ENCODE measurements at regions of chr19 and their contacts with region 1.

Region 1: GRCh38 chr19:11924886-11925650 is at the start of gene ZNF700:
- DNase-seq: peak; percentile 96 to 97
- H3K4me3 ChIP-seq: peak within 1 kb of the TSS; percentile 76 to 94
- H3K27ac ChIP-seq: peak within 1 kb of the TSS; percentile 96
- H3K4me1 ChIP-seq: peaks cover 0 to 28% (median 21%) of the 10 kb centered on the region in 4 donors
- H3K27me3 ChIP-seq: no peaks in the 10 kb centered on the region
- CTCF ChIP-seq: no peak

Region 2: DNA sequence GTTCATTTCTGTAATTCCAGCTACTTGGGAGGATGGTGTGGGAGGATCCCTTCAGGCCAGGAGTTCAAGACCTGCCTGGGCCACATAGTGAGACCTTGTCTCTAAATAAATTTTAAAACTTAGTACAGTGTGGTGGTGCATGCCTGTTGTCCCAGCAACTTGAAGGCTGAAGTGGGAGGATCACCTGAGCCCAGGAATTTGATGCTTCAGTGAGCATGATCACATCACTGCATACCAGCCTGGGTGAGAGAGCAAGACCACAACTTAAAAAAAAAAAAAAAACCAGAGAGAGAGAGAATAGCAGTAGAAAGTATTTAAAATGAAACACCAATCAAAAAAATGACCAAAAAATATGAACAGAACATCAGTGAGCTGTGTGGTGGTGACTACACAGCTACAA is 179.2 kb before region 1 on chr19:
- intact Hi-C with region 1: no loop called
- DNase-seq: no peak
- H3K4me3 ChIP-seq: no peak overlapping the region
- H3K27ac ChIP-seq: no peak overlapping the region
- H3K4me1 ChIP-seq: no peaks in the 10 kb centered on the region
- H3K27me3 ChIP-seq: no peaks in the 10 kb centered on the region
- CTCF ChIP-seq: no peak

Region 3: GRCh38 chr19:11766597-11767591 is 158.2 kb before region 1 on chr19 and contains the start of gene ZNF441:
- intact Hi-C with region 1: no loop called
- DNase-seq: peak; percentile 99
- H3K4me3 ChIP-seq: peak within 1 kb of the TSS; percentile 82 to 85
- H3K27ac ChIP-seq: peak within 1 kb of the TSS; percentile 97
- H3K4me1 ChIP-seq: peaks cover 0 to 18% (median 14%) of the 10 kb centered on the region in 4 donors
- H3K27me3 ChIP-seq: no peaks in the 10 kb centered on the region
- CTCF ChIP-seq: no peak

Region 4: DNA sequence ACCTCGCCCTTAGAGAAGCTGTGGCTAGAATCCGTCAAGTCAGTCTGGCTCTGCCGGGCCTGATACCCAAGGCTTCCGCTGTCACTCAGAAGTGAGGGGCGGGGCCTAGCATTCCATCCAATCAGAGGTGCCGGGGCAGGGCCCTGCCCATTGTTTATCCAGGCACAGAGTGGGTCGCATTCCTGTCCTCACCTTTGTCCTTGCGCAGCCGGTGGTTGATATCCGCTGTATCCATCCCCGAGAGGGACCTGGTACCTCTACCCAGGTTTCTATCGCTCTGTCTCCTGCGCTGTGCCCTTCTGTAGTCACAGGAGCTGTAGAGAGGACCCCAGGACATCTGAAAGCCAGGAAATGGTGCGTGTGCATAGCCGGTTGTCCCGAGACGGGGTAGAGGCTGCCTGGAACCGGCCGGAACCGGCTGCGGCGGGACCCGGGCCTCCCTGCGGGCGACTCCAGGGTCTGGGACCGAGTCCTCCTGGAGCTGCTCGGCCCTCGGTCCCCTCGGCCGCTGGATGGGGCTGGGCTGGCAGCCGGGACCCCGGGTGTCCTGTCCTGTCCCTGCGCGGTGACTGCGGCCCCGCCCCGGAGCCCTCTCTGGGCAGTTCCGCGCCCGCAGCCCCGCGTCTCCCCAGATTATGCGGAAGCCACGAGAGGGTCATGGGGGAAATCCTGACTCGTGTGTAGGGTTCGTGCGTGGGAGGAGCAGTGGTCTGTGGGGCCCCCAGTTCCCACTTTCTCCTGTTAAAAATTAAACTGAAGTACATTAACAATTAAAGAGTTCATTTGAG is 40.0 kb after region 1 on chr19 and contains the start of gene ZNF763:
- intact Hi-C with region 1: loop called (anchors 2 kb)
- DNase-seq: peak; percentile 97
- H3K4me3 ChIP-seq: peak within 1 kb of the TSS; percentile 59 to 63
- H3K27ac ChIP-seq: peak within 1 kb of the TSS; percentile 93 to 96
- H3K4me1 ChIP-seq: peaks cover 0 to 27% (median 14%) of the 10 kb centered on the region in 4 donors
- H3K27me3 ChIP-seq: no peaks in the 10 kb centered on the region
- CTCF ChIP-seq: peak in 1 of 2 experiments; percentile 1

Region 5: GRCh38 chr19:11987405-11988281 is 62.6 kb after region 1 on chr19:
- intact Hi-C with region 1: loop called (anchors 2 kb)
- DNase-seq: peak; percentile 98 to 99
- H3K4me3 ChIP-seq: peak overlapping the region; percentile 69 to 79
- H3K27ac ChIP-seq: peak overlapping the region; percentile 81 to 86
- H3K4me1 ChIP-seq: no peaks in the 10 kb centered on the region
- H3K27me3 ChIP-seq: no peaks in the 10 kb centered on the region
- CTCF ChIP-seq: peak in 1 of 2 experiments; percentile 13

Region 6: GRCh38 chr19:12722566-12723380 is 797.7 kb after region 1 on chr19:
- intact Hi-C with region 1: loop called (anchors 5 kb)
- DNase-seq: peak; percentile 99
- H3K4me3 ChIP-seq: peak overlapping the region; percentile 90 to 91
- H3K27ac ChIP-seq: peak overlapping the region; percentile 89 to 96
- H3K4me1 ChIP-seq: peaks cover 0 to 47% (median 33%) of the 10 kb centered on the region in 4 donors
- H3K27me3 ChIP-seq: no peaks in the 10 kb centered on the region
- CTCF ChIP-seq: no peak

Measured in tibial artery (tissue), 4 donors.